Activated CD4-positive, alpha-beta memory T cell treated with anti-CD3 and anti-CD28 coated beads for 36 hours (primary cell): ENCODE measurements at regions of chr5 and their contacts with region 1.

Region 1: DNA sequence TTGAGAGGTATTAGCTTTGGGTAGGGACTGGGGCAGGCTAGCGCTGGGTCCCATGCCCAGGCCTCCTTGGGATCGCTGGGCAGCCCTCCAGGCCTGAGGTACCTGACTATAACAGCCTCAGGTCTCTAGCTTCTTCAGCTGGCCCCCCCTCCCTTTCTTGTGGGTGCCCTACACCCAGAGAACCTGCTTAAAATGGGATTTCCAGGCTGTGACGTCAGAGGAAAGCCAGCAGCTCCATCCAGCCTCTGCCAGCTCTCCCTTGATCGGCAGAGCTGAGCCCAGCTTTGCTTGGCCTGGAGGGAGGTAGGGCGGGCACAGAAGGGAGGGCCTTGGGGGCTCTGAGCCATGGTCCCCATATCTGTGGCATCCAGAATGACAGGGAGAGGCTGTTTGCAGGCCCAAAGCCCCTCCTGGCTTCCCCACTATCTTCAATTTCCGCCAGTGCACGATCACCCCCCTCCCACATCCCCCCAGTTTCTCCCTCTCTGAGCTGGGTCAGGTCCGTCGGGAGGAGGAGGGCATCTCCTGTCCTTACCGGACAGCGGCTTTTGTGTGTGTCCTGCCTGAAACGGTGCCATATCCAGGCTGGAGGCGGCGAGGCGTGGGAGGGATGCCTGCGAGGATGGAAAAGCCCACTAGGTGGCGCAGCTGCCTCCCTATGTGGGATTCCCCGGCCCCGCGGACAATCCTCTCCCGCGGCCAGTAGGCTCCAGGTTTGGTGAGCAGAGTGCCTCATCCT is 10.8 kb downstream of the REEP2 start:
- DNase-seq: peak; percentile 92
- H3K4me3 Mint-ChIP-seq: peak overlapping the region; percentile 33
- H3K27ac Mint-ChIP-seq: no peak overlapping the region
- H3K4me1 Mint-ChIP-seq: peaks cover 6% of the 10 kb centered on the region
- H3K27me3 Mint-ChIP-seq: peaks cover 4% of the 10 kb centered on the region

Region 2: GRCh38 chr5:138369706-138370105 is 80.0 kb before region 1 on chr5:
- CTCF ChIA-PET with region 1: no interaction called
- POLR2A ChIA-PET with region 1: no interaction called
- intact Hi-C with region 1: no loop called
- DNase-seq: no peak
- H3K4me3 Mint-ChIP-seq: no peak overlapping the region
- H3K27ac Mint-ChIP-seq: no peak overlapping the region
- H3K4me1 Mint-ChIP-seq: peaks cover 45% of the 10 kb centered on the region
- H3K27me3 Mint-ChIP-seq: no peaks in the 10 kb centered on the region

Region 3: DNA sequence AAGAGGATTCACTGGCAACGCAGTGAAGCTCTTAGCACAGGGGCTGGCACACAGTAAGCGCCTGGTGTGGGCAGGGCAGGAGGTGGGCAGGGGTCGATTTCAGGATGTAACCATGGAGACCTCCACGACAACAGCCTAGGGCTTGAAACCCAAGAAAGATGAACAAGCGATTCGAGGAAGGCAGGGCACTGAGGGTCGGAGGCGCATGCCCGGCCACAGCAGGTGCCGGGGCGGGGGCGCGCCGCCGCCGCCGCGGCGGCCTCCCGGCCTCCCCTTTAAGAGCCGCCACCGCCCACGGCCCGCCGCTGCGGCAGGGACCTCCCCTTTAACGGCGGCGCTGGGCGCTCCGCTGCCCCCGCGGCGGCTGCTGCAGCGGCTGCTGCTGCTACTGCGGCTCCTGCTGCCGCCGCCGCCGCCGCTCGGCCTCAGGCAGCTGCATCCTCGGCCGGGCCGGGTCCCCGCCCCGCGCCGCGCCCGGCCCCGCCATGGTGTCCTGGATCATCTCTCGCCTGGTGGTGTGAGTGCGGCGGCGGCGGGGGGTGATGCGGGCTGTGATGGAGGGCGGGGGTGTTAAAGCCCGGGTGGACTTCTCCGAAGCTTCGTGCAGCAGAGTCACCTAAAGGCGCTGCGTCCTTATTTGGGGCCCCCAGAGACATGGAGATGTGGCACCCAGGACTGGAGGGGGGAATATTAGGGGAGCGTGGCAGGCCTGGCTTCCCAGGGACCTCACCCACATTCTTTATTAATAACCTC is 10.8 kb before region 1 on chr5 and contains the start of gene REEP2:
- CTCF ChIA-PET with region 1: interaction called, 16 read pairs
- POLR2A ChIA-PET with region 1: interaction called, 6 read pairs
- intact Hi-C with region 1: no loop called
- DNase-seq: peak; percentile 80
- H3K4me3 Mint-ChIP-seq: peak within 1 kb of the TSS; percentile 78
- H3K27ac Mint-ChIP-seq: peak within 1 kb of the TSS; percentile 60
- H3K4me1 Mint-ChIP-seq: peaks cover 16% of the 10 kb centered on the region
- H3K27me3 Mint-ChIP-seq: peaks cover 3% of the 10 kb centered on the region
- total RNA-seq, gene REEP2: 6.1 to 10.9 TPM

Region 4: GRCh38 chr5:138498376-138498775 is 48.7 kb after region 1 on chr5:
- CTCF ChIA-PET with region 1: interaction called, 71 read pairs
- POLR2A ChIA-PET with region 1: no interaction called
- intact Hi-C with region 1: loop called (anchors 1 kb)
- DNase-seq: no peak
- H3K4me3 Mint-ChIP-seq: no peak overlapping the region
- H3K27ac Mint-ChIP-seq: no peak overlapping the region
- H3K4me1 Mint-ChIP-seq: no peaks in the 10 kb centered on the region
- H3K27me3 Mint-ChIP-seq: peaks cover 3% of the 10 kb centered on the region